ENCODE measurements at regions of chr1 and their contacts with region 1.

Region 1: GRCh38 chr1:247390116-247390791 is 25.7 kb upstream of the NLRP3 start:
- DNase-seq: peak; percentile 61 to 93 (median 78)
- ATAC-seq: peak; percentile 90 to 97 (median 96)
- H3K4me3 ChIP-seq: peak overlapping the region; percentile 43 to 52
- H3K4me3 Mint-ChIP-seq: peak overlapping the region; percentile 60 to 66 (median 62)
- H3K27ac ChIP-seq: peak overlapping the region; percentile 72
- H3K27ac Mint-ChIP-seq: peak overlapping the region; percentile 87 to 93
- H3K4me1 ChIP-seq: peaks cover 0 to 14% of the 10 kb centered on the region in 2 experiments
- H3K4me1 Mint-ChIP-seq: peaks cover 14 to 15% (median 14%) of the 10 kb centered on the region in 3 donors
- H3K27me3 ChIP-seq: no peaks in the 10 kb centered on the region
- H3K27me3 Mint-ChIP-seq: no peaks in the 10 kb centered on the region

Region 2: DNA sequence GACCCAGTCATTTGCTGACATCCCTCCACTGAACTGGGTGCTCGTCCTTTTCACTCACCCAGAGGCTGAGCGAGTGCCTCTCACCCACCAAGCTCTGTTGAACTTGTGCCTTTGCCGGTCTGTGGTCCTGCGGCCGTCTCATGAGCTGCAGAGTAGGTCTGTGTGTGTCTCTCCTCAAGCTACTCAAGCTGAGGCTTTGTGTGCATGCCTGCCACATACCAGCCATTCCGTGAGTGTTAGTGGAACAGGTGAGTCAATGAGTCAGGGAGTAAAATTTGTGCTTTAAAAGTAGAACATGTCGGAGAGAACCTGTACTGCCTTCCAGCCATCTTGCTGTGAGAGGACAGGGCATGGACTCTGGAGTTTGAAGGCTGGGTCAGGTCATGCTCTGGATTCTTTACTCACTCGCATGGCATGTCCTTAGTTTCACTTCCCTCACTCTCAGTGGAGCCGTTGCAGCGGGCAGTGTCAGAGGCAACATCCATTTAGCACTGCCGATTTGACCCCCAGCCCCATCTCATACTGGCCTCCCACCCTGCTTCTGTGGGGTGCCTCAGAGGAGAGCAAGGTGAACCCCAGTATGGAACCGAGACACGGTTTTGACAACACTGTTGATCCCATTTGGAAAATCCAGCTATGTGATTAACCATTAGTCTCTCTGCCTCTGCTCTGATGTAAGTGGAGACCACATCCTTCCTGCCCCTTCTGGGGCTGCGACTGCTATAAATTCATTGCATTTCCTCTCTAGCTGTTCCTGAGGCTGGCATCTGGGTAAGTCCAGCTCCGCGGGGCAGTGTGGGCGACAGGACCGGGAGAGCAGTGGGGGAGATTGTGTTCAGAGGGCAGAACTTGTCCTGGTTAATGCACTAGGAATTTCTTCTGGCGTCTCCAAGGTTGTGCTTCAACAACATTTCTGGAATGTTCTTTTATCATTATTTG is 25.4 kb after region 1 on chr1 and contains the start of gene NLRP3:
- CTCF ChIA-PET with region 1: interaction called, 13 to 23 read pairs
- POLR2A ChIA-PET with region 1: interaction called in 1 of 2 experiments, 4 read pairs
- DNase-seq: peak; percentile 8 to 67 (median 30)
- ATAC-seq: peak; percentile 88 to 97 (median 94)
- H3K4me3 ChIP-seq: peak within 1 kb of the TSS; percentile 52 to 61
- H3K4me3 Mint-ChIP-seq: peak within 1 kb of the TSS; percentile 85 to 91 (median 90)
- H3K27ac ChIP-seq: peak within 1 kb of the TSS; percentile 64
- H3K27ac Mint-ChIP-seq: peak within 1 kb of the TSS; percentile 83 to 92
- H3K4me1 ChIP-seq: peaks cover 10 to 31% of the 10 kb centered on the region in 2 experiments
- H3K4me1 Mint-ChIP-seq: peaks cover 53 to 59% (median 55%) of the 10 kb centered on the region in 3 donors
- H3K27me3 ChIP-seq: peaks cover 0 to 3% of the 10 kb centered on the region in 2 experiments
- H3K27me3 Mint-ChIP-seq: no peaks in the 10 kb centered on the region
- total RNA-seq, gene NLRP3: 2.9 to 8.5 (median 5.1) TPM

Region 3: GRCh38 chr1:247448107-247448791 is 58.0 kb after region 1 on chr1:
- CTCF ChIA-PET with region 1: interaction called, 3 to 18 read pairs
- POLR2A ChIA-PET with region 1: interaction called, 6 to 12 read pairs
- DNase-seq: peak in 20 of 35 experiments; percentile 4 to 56 (median 18)
- ATAC-seq: peak in 3 of 4 experiments; percentile 43 to 65 (median 55)
- H3K4me3 ChIP-seq: no peak overlapping the region
- H3K4me3 Mint-ChIP-seq: peak overlapping the region in 2 of 3 donors; percentile 43 to 63
- H3K27ac ChIP-seq: no peak overlapping the region
- H3K27ac Mint-ChIP-seq: no peak overlapping the region
- H3K4me1 ChIP-seq: no peaks in the 10 kb centered on the region
- H3K4me1 Mint-ChIP-seq: peaks cover 0 to 10% (median 9%) of the 10 kb centered on the region in 3 donors
- H3K27me3 ChIP-seq: no peaks in the 10 kb centered on the region
- H3K27me3 Mint-ChIP-seq: no peaks in the 10 kb centered on the region

Region 4: DNA sequence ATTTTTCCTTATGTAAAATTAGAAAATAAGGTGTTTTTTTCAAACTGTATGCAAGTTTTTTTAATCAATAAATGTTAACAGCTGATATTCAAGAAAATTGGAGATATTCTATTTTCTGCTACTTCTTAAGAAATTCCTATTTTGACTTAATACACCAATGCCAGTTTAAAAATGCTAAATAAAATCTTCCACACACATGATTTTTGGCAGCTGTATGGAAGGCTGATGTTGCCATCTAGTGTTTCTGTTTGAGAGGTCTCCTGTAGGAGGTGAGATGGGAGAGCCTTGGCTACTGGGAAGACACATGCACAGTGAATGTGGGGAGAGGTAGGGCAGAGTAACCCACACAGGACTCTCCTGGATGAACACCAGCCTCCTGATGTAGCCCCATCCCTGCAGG is 96.8 kb after region 1 on chr1:
- CTCF ChIA-PET with region 1: interaction called, 58 to 81 read pairs
- POLR2A ChIA-PET with region 1: interaction called in 1 of 2 experiments, 4 read pairs
- DNase-seq: peak in 24 of 35 experiments; percentile 2 to 74 (median 16)
- ATAC-seq: peak; percentile 60 to 87 (median 78)
- H3K4me3 ChIP-seq: no peak overlapping the region
- H3K4me3 Mint-ChIP-seq: no peak overlapping the region
- H3K27ac ChIP-seq: no peak overlapping the region
- H3K27ac Mint-ChIP-seq: no peak overlapping the region
- H3K4me1 ChIP-seq: no peaks in the 10 kb centered on the region
- H3K4me1 Mint-ChIP-seq: no peaks in the 10 kb centered on the region
- H3K27me3 ChIP-seq: peaks cover 0 to 5% of the 10 kb centered on the region in 2 experiments
- H3K27me3 Mint-ChIP-seq: peaks cover 12 to 13% of the 10 kb centered on the region in 2 donors

Region 5: DNA sequence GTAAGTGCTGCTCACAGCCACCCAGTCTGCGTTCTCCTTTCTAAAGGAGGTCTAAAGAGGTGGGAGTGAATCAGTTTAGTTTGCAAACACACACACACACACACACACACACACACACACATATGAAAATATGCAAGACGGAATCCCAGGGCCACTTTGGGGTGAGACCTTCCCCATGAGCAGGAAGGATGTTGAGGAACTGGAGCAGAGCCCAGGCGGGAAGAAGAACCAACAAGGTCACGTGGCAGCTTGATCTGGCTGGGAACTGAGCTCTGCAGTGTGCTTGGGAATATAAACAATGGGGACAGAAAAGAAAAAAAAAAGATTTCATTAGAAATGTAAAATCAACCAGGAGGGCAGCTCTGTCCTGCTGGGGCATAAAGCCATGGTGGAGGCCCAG is 247.8 kb after region 1 on chr1:
- CTCF ChIA-PET with region 1: no interaction called
- POLR2A ChIA-PET with region 1: no interaction called
- DNase-seq: no peak
- ATAC-seq: no peak
- H3K4me3 ChIP-seq: no peak overlapping the region
- H3K4me3 Mint-ChIP-seq: no peak overlapping the region
- H3K27ac ChIP-seq: no peak overlapping the region
- H3K27ac Mint-ChIP-seq: no peak overlapping the region
- H3K4me1 ChIP-seq: no peaks in the 10 kb centered on the region
- H3K4me1 Mint-ChIP-seq: peaks cover 0 to 11% (median 0%) of the 10 kb centered on the region in 3 donors
- H3K27me3 ChIP-seq: peaks cover 0 to 25% of the 10 kb centered on the region in 2 experiments
- H3K27me3 Mint-ChIP-seq: peaks cover 30 to 69% of the 10 kb centered on the region in 2 donors

Region 6: DNA sequence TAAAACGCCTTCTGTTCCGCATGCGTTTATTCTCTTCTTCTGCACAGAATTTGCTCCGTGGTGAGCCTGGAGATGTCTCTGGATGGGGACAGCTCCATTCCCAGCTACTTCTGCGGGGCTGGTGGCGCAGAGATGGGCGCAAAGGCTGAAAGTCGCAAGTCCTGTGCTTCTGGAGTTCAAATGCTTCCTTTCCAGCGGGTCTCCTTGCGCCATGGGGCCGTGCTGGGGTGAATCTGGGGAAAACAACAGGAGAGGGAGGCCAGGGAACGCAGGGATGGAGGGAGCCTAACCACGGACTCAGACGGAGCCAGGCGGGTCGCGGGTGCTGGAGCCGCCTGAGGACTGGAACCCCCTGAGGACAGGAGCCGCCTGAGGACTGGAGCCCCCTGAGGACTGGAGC is 915.8 kb after region 1 on chr1:
- CTCF ChIA-PET with region 1: no interaction called
- POLR2A ChIA-PET with region 1: no interaction called
- DNase-seq: no peak
- ATAC-seq: no peak
- H3K4me3 ChIP-seq: no peak overlapping the region
- H3K4me3 Mint-ChIP-seq: no peak overlapping the region
- H3K27ac ChIP-seq: no peak overlapping the region
- H3K27ac Mint-ChIP-seq: no peak overlapping the region
- H3K4me1 ChIP-seq: no peaks in the 10 kb centered on the region
- H3K4me1 Mint-ChIP-seq: no peaks in the 10 kb centered on the region
- H3K27me3 ChIP-seq: no peaks in the 10 kb centered on the region
- H3K27me3 Mint-ChIP-seq: no peaks in the 10 kb centered on the region

Measured in T-cell (primary cell).